ENCODE measurements at regions of chr17 and their contacts with region 1.

Region 1: DNA sequence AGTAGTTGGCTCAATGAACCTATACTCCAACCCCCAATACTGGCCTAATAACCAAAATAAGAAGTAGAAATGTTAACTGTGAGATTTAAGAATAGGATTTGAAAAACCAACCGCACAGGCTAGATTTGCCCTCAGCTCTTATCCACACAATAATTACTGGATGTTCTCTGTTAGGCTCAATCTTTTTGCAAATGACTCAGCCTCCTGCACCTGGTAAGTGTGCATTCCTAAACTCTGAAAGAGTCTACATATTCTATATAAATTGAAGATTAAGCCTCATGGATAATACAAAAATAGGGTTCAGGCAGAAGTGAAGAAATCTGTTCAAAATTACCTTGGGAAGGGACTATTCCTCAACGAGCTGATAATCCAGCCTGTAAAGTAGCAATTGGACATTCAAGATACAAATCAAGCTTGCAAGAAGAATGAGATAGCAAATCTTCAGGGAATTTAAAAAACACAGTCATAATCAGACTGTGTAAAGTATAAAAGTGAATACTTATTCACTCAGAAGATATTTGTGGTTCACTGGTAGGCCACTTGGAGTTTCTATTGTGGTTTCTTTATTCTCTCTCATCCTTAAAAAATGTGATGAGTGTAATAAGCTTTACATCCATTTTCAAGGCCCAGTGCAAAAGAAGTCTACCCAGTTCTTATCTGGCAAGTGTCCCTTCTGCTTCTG is 931.9 kb upstream of the SOX9 start:
- DNase-seq: peak; percentile 20 to 91
- H3K4me3 ChIP-seq: peak overlapping the region; percentile 24; the same call in 1 of the 2 replicates
- H3K27ac ChIP-seq: peak overlapping the region; percentile 95
- H3K4me1 ChIP-seq: peaks cover 25% of the 10 kb centered on the region
- H3K27me3 ChIP-seq: no peaks in the 10 kb centered on the region
- CTCF ChIP-seq: no peak

Region 2: DNA sequence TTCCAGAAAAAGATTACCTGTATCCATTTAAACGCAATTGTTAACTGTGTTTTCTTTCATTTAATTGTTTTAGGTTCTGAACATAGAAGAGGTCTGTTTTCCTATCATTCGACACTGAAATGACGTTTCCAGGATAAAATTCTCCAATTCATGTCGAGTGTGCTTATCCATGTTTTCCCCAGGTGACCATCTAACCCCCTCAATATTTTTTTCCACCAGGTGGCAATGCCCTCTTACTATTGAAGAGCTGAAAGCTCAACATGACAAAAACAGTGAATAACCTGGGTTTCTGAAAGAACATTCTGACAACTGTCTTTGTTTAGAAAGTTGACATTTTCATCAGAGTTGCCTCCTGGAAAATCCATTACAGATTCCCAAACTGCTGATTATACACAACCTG is 70.9 kb before region 1 on chr17:
- CTCF ChIA-PET with region 1: no interaction called
- POLR2A ChIA-PET with region 1: no interaction called
- intact Hi-C with region 1: loop called (anchors 2 kb)
- DNase-seq: peak in 1 of 2 experiments; percentile 27
- H3K4me3 ChIP-seq: no peak overlapping the region
- H3K27ac ChIP-seq: no peak overlapping the region
- H3K4me1 ChIP-seq: 0 out of 2 replicates have a peak, but pooled peaks cover 3% of the 10 kb centered on the region
- H3K27me3 ChIP-seq: no peaks in the 10 kb centered on the region
- CTCF ChIP-seq: peak; percentile 69

Region 3: DNA sequence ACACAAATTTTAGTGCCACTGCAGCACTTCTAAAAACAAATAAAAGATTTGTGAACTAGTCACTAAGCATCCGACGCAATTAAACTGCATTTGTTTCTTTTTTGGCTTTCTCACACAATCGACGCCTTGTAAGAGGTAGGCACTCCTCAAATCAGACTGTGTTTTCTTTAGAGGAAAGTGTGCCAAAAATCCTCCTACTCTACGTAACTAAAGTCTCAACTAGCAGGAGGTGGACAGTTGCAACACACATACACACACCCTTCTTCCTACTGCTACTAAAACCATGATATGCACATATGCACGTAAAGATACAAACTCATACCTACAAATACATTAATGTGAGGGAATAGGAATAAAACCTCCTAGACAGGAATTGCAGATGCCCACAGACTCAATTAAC is 87.1 kb after region 1 on chr17:
- CTCF ChIA-PET with region 1: no interaction called
- POLR2A ChIA-PET with region 1: no interaction called
- intact Hi-C with region 1: no loop called
- DNase-seq: no peak
- H3K4me3 ChIP-seq: no peak overlapping the region
- H3K27ac ChIP-seq: no peak overlapping the region
- H3K4me1 ChIP-seq: no peaks in the 10 kb centered on the region
- H3K27me3 ChIP-seq: no peaks in the 10 kb centered on the region
- CTCF ChIP-seq: no peak

Measured in PC-9 (cell line).